Ascending aorta (tissue), 2 donors: ENCODE measurements at regions of chr22 and their contacts with region 1.

Region 1: DNA sequence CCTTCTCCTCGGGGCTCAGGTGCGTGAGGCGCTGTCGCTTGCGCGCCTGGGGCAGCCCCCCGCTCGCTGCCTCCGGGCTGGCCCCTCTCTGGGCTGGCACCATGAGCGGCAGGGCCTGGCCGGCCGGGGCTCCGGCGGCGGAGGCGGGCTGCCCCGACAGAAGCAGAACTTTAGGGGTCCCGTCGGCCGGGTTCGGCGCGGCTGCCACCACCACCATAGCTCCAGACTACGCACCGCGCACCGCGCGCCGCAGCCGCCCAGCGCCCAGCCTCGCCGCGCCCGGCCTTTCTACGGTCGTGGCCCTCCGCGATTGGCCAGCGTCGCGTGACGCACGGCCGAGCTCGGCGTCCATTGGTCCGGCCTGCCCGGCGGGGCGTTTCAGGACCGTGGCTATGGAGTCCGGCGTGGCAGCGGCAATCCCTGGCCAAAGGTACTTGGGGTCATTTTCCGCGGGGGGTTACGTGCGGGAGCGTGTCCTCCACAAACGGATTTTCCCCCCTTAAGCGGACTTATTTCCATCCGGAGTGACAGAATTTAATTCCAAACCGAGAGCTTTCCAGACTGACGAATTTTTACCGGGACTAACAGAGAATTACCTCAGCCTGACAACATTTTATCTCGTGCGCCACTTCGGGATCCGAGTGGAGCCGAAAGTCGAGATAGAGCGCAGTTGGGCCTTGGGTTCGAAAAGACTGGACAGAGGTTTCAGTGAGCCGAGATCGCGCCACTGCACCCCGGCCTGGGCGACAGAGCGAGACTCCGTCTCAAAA is at the start of gene XBP1:
- DNase-seq: peak; percentile 76 to 97
- H3K4me3 ChIP-seq: peak within 1 kb of the TSS; percentile 96 to 100
- H3K27ac ChIP-seq: peak within 1 kb of the TSS; percentile 100
- H3K4me1 ChIP-seq: peaks cover 17 to 30% of the 10 kb centered on the region in 2 donors
- H3K27me3 ChIP-seq: no peaks in the 10 kb centered on the region
- CTCF ChIP-seq: no peak
- total RNA-seq, gene XBP1: 158 TPM

Region 2: DNA sequence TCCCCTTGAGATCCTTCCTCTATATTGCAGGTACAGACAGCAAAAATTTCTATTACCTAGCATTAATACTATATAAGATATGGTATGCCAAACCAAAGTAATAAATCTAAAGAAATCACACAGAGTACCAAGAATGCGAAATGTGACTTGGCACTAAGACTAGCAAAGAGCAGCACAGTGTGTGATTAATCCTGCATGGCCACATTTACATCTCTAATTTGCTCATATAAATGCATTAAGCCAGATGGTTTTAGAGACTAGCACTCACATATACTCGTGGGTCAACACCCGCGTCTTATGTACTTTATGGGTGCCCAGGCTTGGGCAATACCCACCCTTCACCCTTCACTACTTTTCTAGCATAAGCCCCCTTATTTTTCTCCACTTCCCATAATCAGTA is 334.1 kb before region 1 on chr22:
- intact Hi-C with region 1: no loop called
- DNase-seq: no peak
- H3K4me3 ChIP-seq: no peak overlapping the region
- H3K27ac ChIP-seq: no peak overlapping the region
- H3K4me1 ChIP-seq: peaks cover 0 to 4% of the 10 kb centered on the region in 2 donors
- H3K27me3 ChIP-seq: no peaks in the 10 kb centered on the region
- CTCF ChIP-seq: no peak

Region 3: GRCh38 chr22:28514321-28514821 is 286.1 kb before region 1 on chr22:
- intact Hi-C with region 1: no loop called
- DNase-seq: no peak
- H3K4me3 ChIP-seq: no peak overlapping the region
- H3K27ac ChIP-seq: no peak overlapping the region
- H3K4me1 ChIP-seq: peaks cover 0 to 8% of the 10 kb centered on the region in 2 donors
- H3K27me3 ChIP-seq: no peaks in the 10 kb centered on the region
- CTCF ChIP-seq: no peak

Region 4: GRCh38 chr22:28674121-28674563 is 126.4 kb before region 1 on chr22:
- intact Hi-C with region 1: loop called (anchors 5 kb)
- DNase-seq: no peak
- H3K4me3 ChIP-seq: no peak overlapping the region
- H3K27ac ChIP-seq: no peak overlapping the region
- H3K4me1 ChIP-seq: peaks cover 0 to 3% of the 10 kb centered on the region in 2 donors
- H3K27me3 ChIP-seq: no peaks in the 10 kb centered on the region
- CTCF ChIP-seq: no peak

Region 5: DNA sequence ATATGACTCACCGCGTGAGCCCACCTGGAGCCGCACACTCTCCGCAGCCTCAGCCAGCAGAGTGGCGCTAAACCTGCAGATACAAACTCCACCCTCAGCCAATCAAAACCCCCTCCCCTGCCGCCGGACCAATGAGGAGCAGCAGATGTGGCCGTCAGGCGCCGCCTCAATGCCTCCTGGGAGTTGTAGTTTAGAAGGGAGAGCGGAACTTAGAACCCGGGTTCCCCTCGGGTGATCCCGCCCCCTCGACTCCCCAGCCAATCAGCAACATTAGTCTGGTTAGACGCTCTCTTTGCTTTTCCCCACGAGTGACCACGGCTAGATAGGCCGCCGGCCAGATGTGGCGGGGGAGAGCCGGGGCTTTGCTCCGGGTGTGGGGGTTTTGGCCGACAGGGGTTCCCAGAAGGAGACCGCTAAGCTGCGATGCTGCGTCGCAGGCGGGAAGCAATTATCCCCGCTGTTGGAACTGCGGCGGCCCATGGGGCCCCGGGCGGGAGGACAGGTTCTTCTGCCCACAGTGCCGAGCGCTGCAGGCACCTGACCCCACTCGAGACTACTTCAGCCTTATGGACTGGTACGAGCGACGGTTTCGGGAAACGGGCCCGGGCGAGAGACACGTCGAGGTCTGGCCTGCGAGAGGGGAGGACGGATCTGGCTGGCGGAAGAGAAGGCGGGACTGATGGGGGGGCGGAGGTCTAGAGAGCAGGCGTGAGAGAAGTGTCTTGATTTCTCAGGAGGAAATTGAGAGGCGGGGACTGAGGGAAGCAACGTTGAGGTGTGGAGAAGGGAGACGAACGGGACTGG is 58.5 kb before region 1 on chr22 and contains the starts of genes CHEK2 and HSCB:
- intact Hi-C with region 1: loop called (anchors 1 kb)
- DNase-seq: peak; percentile 96 to 99
- H3K4me3 ChIP-seq: peak within 1 kb of the TSS; percentile 65 to 98
- H3K27ac ChIP-seq: peak within 1 kb of the TSS; percentile 98 to 100
- H3K4me1 ChIP-seq: peaks cover 0 to 8% of the 10 kb centered on the region in 2 donors
- H3K27me3 ChIP-seq: no peaks in the 10 kb centered on the region
- CTCF ChIP-seq: no peak
- total RNA-seq, gene CHEK2: 1.3 TPM
- total RNA-seq, gene HSCB: 0.85 TPM

Region 6: GRCh38 chr22:28772633-28773460 is 27.6 kb before region 1 on chr22 and contains the start of gene CCDC117:
- intact Hi-C with region 1: loop called (anchors 1 kb)
- DNase-seq: peak; percentile 86 to 97
- H3K4me3 ChIP-seq: peak within 1 kb of the TSS; percentile 90
- H3K27ac ChIP-seq: peak within 1 kb of the TSS; percentile 95 to 98
- H3K4me1 ChIP-seq: peaks cover 3 to 10% of the 10 kb centered on the region in 2 donors
- H3K27me3 ChIP-seq: no peaks in the 10 kb centered on the region
- CTCF ChIP-seq: peak in 1 of 3 experiments; percentile 81
- total RNA-seq, gene CCDC117: 10.7 TPM

Region 7: GRCh38 chr22:28783786-28784671 is 16.5 kb before region 1 on chr22:
- intact Hi-C with region 1: no loop called
- DNase-seq: no peak
- H3K4me3 ChIP-seq: no peak overlapping the region
- H3K27ac ChIP-seq: no peak overlapping the region
- H3K4me1 ChIP-seq: no peaks in the 10 kb centered on the region
- H3K27me3 ChIP-seq: no peaks in the 10 kb centered on the region
- CTCF ChIP-seq: no peak

Region 8: GRCh38 chr22:28846994-28847393 is 46.5 kb after region 1 on chr22:
- intact Hi-C with region 1: no loop called
- DNase-seq: no peak
- H3K4me3 ChIP-seq: no peak overlapping the region
- H3K27ac ChIP-seq: no peak overlapping the region
- H3K4me1 ChIP-seq: no peaks in the 10 kb centered on the region
- H3K27me3 ChIP-seq: no peaks in the 10 kb centered on the region
- CTCF ChIP-seq: no peak

Region 9: DNA sequence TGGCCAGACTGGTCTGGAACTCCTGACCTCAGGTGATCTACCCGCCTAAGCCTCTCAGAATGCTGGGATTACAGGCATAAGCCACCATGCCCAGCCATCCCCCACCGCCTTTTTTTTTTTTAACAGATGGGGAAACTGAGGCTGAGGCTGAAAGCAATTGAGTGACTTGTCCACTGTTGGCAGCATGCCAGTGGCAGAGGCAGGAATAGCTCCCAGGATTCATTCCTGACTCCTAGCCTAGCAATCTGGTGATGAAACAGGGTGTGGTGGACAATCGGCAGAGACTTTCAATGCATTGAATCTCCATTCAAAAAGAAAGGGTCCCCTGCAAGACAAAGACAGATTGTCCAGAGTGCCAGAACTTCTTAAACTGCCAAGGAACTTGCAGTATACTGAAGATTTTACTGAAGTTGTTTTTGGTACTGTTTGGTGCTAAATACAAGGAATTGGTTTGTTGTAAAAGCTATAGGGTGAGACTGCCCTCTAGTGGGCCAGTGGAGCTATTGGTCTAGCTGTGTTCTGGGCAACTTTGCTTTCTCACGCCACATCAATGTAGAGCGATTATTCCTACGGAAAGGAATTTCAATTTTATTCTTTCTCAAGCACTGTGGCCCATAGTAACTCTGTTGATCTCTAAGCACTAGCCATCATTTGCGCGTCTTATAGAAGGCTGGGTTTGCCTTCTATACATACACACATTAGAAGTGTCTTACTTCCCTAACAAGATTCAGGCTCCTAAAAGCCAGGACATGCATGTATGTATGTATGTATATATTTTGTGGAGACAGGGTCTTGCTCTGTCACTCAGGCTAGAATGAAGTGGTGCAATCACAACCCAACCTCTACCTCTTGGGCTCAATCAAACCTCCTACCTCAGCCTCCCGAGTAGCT is 240.1 kb after region 1 on chr22:
- intact Hi-C with region 1: loop called (anchors 5 kb)
- DNase-seq: peak in 1 of 2 donors; percentile 85
- H3K4me3 ChIP-seq: no peak overlapping the region
- H3K27ac ChIP-seq: peak overlapping the region in 1 of 2 donors; percentile 35
- H3K4me1 ChIP-seq: peaks cover 0 to 19% of the 10 kb centered on the region in 2 donors
- H3K27me3 ChIP-seq: no peaks in the 10 kb centered on the region
- CTCF ChIP-seq: peak; percentile 94 to 97 (median 96)